Naive thymus-derived CD4-positive, alpha-beta T cell (primary cell): ENCODE measurements at regions of chr5 and their contacts with region 1.

Region 1: GRCh38 chr5:177431317-177432142 is 5.1 kb downstream of the GRK6 start:
- DNase-seq: peak; percentile 46 to 77 (median 73)
- ATAC-seq: peak; percentile 36
- H3K4me3 ChIP-seq: peak overlapping the region; percentile 95
- H3K4me3 Mint-ChIP-seq: peak overlapping the region; percentile 87 to 96 (median 94)
- H3K27ac ChIP-seq: peak overlapping the region; percentile 92
- H3K27ac Mint-ChIP-seq: peak overlapping the region; percentile 91 to 97 (median 94)
- H3K4me1 ChIP-seq: peaks cover 67 to 70% of the 10 kb centered on the region in 2 donors
- H3K4me1 Mint-ChIP-seq: peaks cover 37 to 87% (median 66%) of the 10 kb centered on the region in 7 donors
- H3K27me3 ChIP-seq: no peaks in the 10 kb centered on the region
- H3K27me3 Mint-ChIP-seq: no peaks in the 10 kb centered on the region

Region 2: DNA sequence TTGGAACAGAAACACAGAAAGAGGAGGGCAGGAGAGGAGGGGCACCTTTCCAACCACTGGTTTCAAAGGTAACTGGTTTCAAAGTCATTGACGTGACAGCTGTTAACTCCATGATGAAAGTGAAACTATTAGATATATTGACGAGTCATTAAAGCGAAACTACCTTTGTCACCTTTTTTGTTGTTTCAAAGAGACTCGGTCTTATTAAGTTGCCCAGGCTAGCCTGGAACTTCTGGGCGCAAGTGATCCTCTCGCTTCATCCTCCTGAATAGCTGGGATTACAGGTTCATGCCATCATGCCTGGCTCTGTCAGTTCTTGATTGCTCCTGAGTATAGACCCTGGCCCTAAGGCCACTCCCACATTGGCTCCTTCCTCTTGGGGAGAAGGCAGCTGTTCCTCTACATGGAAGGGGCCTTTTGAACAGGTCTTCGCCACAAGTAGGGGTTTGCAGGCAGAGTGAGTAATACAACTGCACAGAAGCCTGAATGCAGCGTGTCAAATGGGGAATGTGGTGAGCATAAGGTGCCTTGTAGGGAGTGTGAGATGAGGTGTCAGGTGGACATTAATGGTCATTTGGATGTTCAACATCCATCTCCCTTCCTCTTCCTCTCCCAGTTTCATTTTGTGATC is 18.8 kb before region 1 on chr5:
- CTCF ChIA-PET with region 1: interaction called, 10 read pairs
- POLR2A ChIA-PET with region 1: interaction called, 804 read pairs
- intact Hi-C with region 1: loop called in 1 of 2 experiments (anchors 2 kb)
- DNase-seq: no peak
- ATAC-seq: peak; percentile 34
- H3K4me3 ChIP-seq: no peak overlapping the region
- H3K4me3 Mint-ChIP-seq: peak overlapping the region in 2 of 10 donors; percentile 7 to 21
- H3K27ac ChIP-seq: no peak overlapping the region
- H3K27ac Mint-ChIP-seq: peak overlapping the region in 2 of 9 donors; percentile 46 to 55
- H3K4me1 ChIP-seq: peaks cover 14 to 24% of the 10 kb centered on the region in 2 donors
- H3K4me1 Mint-ChIP-seq: peaks cover 8 to 37% (median 26%) of the 10 kb centered on the region in 7 donors
- H3K27me3 ChIP-seq: no peaks in the 10 kb centered on the region
- H3K27me3 Mint-ChIP-seq: peaks cover 0 to 3% (median 0%) of the 10 kb centered on the region in 5 donors

Region 3: DNA sequence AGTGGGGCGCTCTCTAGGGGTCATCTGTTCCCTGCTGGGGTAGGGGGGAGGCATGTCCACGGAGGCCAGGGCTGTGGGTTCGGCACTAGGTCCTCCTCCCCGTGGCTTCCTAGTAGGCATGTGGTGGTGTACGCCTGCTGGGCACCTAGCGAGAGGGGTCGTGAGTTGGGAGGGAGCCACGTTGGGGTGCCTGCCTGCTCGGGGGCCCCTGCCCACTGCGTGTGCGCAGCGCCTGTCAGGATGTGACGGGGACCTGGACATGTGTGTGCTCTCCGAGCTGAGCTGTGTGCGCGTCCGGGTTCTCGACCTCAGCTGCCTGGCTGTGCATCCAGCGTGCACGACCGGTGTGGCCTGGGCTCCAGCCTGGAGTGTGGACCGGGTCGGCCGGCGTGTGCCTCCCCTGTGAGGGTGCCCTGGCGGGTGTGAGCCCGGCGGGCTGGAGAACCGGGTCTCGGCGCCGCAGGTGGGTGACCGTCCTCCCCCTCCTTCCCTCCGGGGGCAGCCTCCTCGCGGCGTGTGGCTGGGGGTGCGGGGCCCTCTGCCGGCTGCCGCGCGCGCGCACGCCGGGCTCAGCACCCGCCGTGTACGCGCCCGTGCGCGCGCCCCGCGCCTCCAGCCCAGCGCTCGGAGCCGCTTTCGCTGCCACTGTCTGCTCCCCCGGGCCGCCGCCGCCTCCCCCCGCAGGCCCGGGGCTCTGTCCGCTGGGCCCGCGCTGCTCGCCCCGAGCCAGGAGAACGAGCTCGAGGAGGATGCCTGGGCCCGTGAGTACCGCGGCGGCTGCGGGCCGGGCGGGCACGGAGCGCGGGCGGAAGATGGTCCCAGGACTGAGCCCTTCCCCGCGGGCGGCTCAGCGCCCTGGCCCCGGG is 14.9 kb after region 1 on chr5 and contains the start of gene PRR7:
- CTCF ChIA-PET with region 1: interaction called, 37 read pairs
- POLR2A ChIA-PET with region 1: interaction called, 804 read pairs
- intact Hi-C with region 1: loop called (anchors 1 kb)
- DNase-seq: peak; percentile 71 to 85 (median 81)
- ATAC-seq: peak; percentile 75
- H3K4me3 ChIP-seq: peak within 1 kb of the TSS; percentile 64
- H3K4me3 Mint-ChIP-seq: peak within 1 kb of the TSS; percentile 77 to 85 (median 82)
- H3K27ac ChIP-seq: peak within 1 kb of the TSS; percentile 97
- H3K27ac Mint-ChIP-seq: peak within 1 kb of the TSS; percentile 86 to 97 (median 92)
- H3K4me1 ChIP-seq: peaks cover 7 to 34% of the 10 kb centered on the region in 2 donors
- H3K4me1 Mint-ChIP-seq: peaks cover 31 to 52% (median 41%) of the 10 kb centered on the region in 7 donors
- H3K27me3 ChIP-seq: no peaks in the 10 kb centered on the region
- H3K27me3 Mint-ChIP-seq: peaks cover 0 to 10% (median 0%) of the 10 kb centered on the region in 5 donors
- total RNA-seq, gene PRR7: 6.4 to 31.8 (median 6.8) TPM

Region 4: GRCh38 chr5:177620560-177620959 is 189.0 kb after region 1 on chr5:
- CTCF ChIA-PET with region 1: no interaction called
- POLR2A ChIA-PET with region 1: no interaction called
- intact Hi-C with region 1: no loop called
- DNase-seq: no peak
- ATAC-seq: no peak
- H3K4me3 ChIP-seq: no peak overlapping the region
- H3K4me3 Mint-ChIP-seq: no peak overlapping the region
- H3K27ac ChIP-seq: no peak overlapping the region
- H3K27ac Mint-ChIP-seq: no peak overlapping the region
- H3K4me1 ChIP-seq: no peaks in the 10 kb centered on the region
- H3K4me1 Mint-ChIP-seq: no peaks in the 10 kb centered on the region
- H3K27me3 ChIP-seq: no peaks in the 10 kb centered on the region
- H3K27me3 Mint-ChIP-seq: no peaks in the 10 kb centered on the region